T-cell (primary cell): ENCODE measurements at regions of chr11 and their contacts with region 1.

Region 1: GRCh38 chr11:6328321-6328720 is 8.0 kb upstream of the CAVIN3 start:
- DNase-seq: no peak
- ATAC-seq: no peak
- H3K4me3 ChIP-seq: no peak overlapping the region
- H3K4me3 Mint-ChIP-seq: no peak overlapping the region
- H3K27ac ChIP-seq: no peak overlapping the region
- H3K27ac Mint-ChIP-seq: no peak overlapping the region
- H3K4me1 ChIP-seq: no peaks in the 10 kb centered on the region
- H3K4me1 Mint-ChIP-seq: no peaks in the 10 kb centered on the region
- H3K27me3 ChIP-seq: peaks cover 3 to 16% of the 10 kb centered on the region in 2 experiments
- H3K27me3 Mint-ChIP-seq: peaks cover 14 to 31% of the 10 kb centered on the region in 2 donors

Region 2: DNA sequence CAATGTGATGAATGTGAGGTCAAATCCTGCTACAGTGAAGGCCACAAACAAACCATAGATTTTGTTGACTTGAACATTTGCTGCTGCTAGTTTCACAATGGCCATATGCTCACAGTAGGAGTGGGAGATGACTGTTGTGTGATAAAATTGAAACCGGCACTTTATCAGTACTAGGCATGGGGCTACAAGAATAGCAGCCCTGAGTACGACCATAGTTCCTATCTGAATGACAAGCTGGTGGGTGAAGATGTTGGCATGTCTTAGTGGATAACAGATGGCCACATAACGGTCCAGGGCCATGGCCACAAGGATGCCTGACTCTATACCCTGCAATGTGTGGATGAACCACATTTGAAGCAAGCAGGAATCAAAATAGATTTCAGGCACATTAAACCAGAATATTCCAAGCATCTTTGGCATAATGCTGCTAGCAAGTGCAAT is 1176.6 kb before region 1 on chr11:
- CTCF ChIA-PET with region 1: no interaction called
- POLR2A ChIA-PET with region 1: interaction called in 1 of 2 experiments, 12 read pairs
- DNase-seq: no peak
- ATAC-seq: no peak
- H3K4me3 ChIP-seq: no peak overlapping the region
- H3K4me3 Mint-ChIP-seq: no peak overlapping the region
- H3K27ac ChIP-seq: no peak overlapping the region
- H3K27ac Mint-ChIP-seq: no peak overlapping the region
- H3K4me1 ChIP-seq: no peaks in the 10 kb centered on the region
- H3K4me1 Mint-ChIP-seq: no peaks in the 10 kb centered on the region
- H3K27me3 ChIP-seq: no peaks in the 10 kb centered on the region
- H3K27me3 Mint-ChIP-seq: peaks cover 0 to 9% of the 10 kb centered on the region in 2 donors